Gastrocnemius medialis (tissue), 4 donors: ENCODE measurements at regions of chr5 and their contacts with region 1.

Region 1: DNA sequence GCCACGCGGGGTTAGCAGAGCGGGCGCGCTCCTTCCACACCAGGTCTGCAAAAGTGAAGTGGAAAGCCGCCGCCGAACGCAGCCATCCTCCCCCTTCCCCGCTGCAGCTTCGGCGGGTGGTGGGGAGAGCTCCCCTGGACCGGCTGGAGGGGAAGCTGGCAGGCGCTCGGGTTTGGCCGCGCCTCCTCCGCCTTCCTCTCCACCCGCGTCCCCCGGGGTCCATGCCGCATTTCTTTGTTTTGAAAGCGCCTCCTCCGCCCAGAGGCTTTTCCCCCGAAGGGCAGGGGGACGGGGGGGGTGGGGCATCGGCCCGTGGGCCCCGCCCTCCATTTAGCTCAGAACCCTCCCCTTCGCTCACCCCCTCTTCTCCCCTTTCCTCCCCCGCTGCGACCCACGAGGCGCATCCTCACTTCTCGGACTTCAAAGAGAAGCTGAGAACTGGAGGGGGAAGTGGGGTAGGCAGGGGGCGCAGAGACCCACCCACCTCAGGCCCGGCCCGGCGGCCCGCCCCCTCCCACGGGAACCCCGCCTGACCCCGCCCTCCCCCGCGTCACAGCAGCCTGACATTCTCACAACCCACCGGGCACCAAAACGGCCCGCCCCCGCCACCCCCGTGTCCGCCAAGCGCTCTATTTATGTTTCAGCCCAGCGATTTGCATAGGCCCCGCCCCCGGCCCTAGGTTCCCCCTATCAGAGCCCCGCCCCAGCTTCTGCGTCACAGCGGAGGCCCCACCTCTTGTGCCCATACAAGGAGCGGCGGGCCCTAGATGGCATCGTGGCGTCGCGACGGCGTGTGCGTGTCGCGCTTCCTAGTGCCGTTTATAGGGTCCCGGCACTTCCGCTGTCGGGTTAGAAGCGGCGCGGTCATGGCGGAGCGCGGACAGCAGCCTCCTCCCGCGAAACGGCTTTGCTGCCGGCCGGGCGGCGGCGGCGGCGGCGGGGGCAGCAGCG is at the start of gene ZSWIM6:
- DNase-seq: peak; percentile 99
- ATAC-seq: peak; percentile 81
- H3K4me3 ChIP-seq: peak within 1 kb of the TSS; percentile 85 to 100 (median 98)
- H3K27ac ChIP-seq: peak within 1 kb of the TSS; percentile 90 to 94 (median 94)
- H3K4me1 ChIP-seq: peaks cover 7 to 14% of the 10 kb centered on the region in 2 donors
- H3K27me3 ChIP-seq: no peaks in the 10 kb centered on the region
- CTCF ChIP-seq: no peak
- POLR2A ChIP-seq: peak; percentile 95 to 97
- total RNA-seq, gene ZSWIM6: 1.9 to 4.0 (median 3.0) TPM

Region 2: GRCh38 chr5:60960591-60960990 is 371.1 kb before region 1 on chr5:
- in situ Hi-C with region 1: no loop called
- intact Hi-C with region 1: loop called (anchors 5 kb)
- DNase-seq: no peak
- ATAC-seq: no peak
- H3K4me3 ChIP-seq: no peak overlapping the region
- H3K27ac ChIP-seq: no peak overlapping the region
- H3K4me1 ChIP-seq: peaks cover 17 to 19% of the 10 kb centered on the region in 2 donors
- H3K27me3 ChIP-seq: no peaks in the 10 kb centered on the region
- CTCF ChIP-seq: peak in 2 of 5 experiments; percentile 6 to 34
- POLR2A ChIP-seq: no peak

Region 3: DNA sequence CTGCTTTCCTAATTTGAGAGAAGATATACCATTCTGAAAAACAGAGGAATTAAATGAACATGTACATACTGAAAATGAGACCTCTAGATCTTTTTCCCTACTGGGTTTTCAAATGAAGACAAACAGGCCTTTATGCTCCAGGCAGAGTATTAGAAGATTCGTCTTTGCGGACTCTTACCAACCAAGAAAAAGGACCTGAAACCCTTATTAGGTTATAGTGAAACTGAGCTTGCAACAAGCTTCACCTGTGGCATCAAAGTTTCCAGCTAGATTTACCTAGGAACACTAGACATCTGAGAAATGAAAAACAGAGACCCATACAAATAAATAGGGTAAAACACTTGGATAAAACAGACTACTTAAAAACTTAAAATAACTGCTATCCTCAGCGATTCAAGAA is 215.7 kb before region 1 on chr5:
- in situ Hi-C with region 1: no loop called
- intact Hi-C with region 1: no loop called
- DNase-seq: no peak
- ATAC-seq: no peak
- H3K4me3 ChIP-seq: no peak overlapping the region
- H3K27ac ChIP-seq: no peak overlapping the region
- H3K4me1 ChIP-seq: no peaks in the 10 kb centered on the region
- H3K27me3 ChIP-seq: no peaks in the 10 kb centered on the region
- CTCF ChIP-seq: no peak
- POLR2A ChIP-seq: no peak

Region 4: GRCh38 chr5:61301341-61302199 is 30.1 kb before region 1 on chr5:
- in situ Hi-C with region 1: no loop called
- intact Hi-C with region 1: loop called (anchors 2 kb)
- DNase-seq: peak; percentile 80 to 82
- ATAC-seq: peak; percentile 98 to 99
- H3K4me3 ChIP-seq: no peak overlapping the region
- H3K27ac ChIP-seq: no peak overlapping the region
- H3K4me1 ChIP-seq: peaks cover 16 to 21% of the 10 kb centered on the region in 2 donors
- H3K27me3 ChIP-seq: no peaks in the 10 kb centered on the region
- CTCF ChIP-seq: no peak
- POLR2A ChIP-seq: no peak

Region 5: DNA sequence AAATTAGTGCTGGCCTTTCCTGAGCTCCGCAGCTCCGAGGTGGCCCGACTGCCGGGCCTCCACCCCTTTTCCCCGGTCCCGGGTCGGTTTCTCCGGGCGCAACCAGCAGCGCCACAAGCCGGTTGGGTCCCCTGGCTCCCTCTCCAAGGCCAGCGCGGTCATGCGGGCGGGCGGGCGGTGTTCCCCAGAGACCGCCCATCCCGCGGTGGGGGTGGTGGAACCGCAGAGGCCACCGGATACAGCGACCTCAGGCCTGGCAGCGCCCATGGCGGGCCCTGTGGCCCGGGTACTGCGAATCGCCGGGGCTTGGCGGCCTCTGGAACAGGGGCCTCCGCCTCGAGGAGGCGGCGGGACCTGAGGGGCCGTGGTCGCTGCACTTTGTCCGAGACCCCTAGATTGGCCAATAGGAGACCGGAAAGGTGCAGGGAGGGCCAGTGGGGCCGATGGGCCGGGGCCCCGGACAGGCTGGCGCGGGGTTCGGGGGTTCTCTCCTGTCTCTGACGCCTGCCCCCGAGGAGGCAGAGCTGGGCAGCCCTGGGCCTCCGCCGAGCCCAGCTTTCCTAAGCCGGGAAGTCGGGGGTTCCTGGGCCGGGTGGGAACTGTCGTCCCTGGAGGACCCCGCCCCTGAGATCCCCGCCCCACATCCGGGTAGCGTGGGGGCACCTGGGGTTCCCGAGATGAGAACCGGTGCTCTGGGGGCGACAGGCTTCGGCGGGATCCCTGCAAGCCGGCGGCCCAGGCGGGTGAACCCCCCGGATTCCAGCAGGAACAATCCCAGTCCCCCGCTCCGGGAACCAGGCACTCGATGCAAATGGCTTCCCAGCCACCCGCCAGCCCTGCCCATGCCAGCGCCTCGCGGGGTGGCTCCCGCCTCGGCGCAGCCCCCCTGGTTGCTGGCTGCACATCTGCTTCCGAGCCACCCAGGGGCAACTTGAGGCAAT is 294.3 kb after region 1 on chr5:
- in situ Hi-C with region 1: no loop called
- intact Hi-C with region 1: loop called (anchors 2 kb)
- DNase-seq: peak; percentile 31
- ATAC-seq: peak; percentile 58 to 69
- H3K4me3 ChIP-seq: peak overlapping the region; percentile 62 to 69 (median 65)
- H3K27ac ChIP-seq: peak overlapping the region; percentile 33 to 60 (median 58)
- H3K4me1 ChIP-seq: peaks cover 12 to 19% of the 10 kb centered on the region in 2 donors
- H3K27me3 ChIP-seq: no peaks in the 10 kb centered on the region
- CTCF ChIP-seq: no peak
- POLR2A ChIP-seq: no peak

Region 6: GRCh38 chr5:62190173-62190572 is 858.5 kb after region 1 on chr5:
- in situ Hi-C with region 1: no loop called
- intact Hi-C with region 1: no loop called
- DNase-seq: no peak
- ATAC-seq: no peak
- H3K4me3 ChIP-seq: no peak overlapping the region
- H3K27ac ChIP-seq: no peak overlapping the region
- H3K4me1 ChIP-seq: no peaks in the 10 kb centered on the region
- H3K27me3 ChIP-seq: no peaks in the 10 kb centered on the region
- CTCF ChIP-seq: no peak
- POLR2A ChIP-seq: no peak